Spleen (tissue), 13 donors: ENCODE measurements at regions of chr1 and their contacts with region 1.

Region 1: GRCh38 chr1:204503122-204503912 is 8.7 kb upstream of the PIK3C2B start:
- DNase-seq: no peak
- H3K4me3 ChIP-seq: no peak overlapping the region
- H3K27ac ChIP-seq: peak overlapping the region in 1 of 8 donors; percentile 11
- H3K4me1 ChIP-seq: peaks cover 10 to 70% (median 33%) of the 10 kb centered on the region in 6 donors
- H3K27me3 ChIP-seq: no peaks in the 10 kb centered on the region
- CTCF ChIP-seq: peak; percentile 77 to 90 (median 84)
- POLR2A ChIP-seq: no peak

Region 2: DNA sequence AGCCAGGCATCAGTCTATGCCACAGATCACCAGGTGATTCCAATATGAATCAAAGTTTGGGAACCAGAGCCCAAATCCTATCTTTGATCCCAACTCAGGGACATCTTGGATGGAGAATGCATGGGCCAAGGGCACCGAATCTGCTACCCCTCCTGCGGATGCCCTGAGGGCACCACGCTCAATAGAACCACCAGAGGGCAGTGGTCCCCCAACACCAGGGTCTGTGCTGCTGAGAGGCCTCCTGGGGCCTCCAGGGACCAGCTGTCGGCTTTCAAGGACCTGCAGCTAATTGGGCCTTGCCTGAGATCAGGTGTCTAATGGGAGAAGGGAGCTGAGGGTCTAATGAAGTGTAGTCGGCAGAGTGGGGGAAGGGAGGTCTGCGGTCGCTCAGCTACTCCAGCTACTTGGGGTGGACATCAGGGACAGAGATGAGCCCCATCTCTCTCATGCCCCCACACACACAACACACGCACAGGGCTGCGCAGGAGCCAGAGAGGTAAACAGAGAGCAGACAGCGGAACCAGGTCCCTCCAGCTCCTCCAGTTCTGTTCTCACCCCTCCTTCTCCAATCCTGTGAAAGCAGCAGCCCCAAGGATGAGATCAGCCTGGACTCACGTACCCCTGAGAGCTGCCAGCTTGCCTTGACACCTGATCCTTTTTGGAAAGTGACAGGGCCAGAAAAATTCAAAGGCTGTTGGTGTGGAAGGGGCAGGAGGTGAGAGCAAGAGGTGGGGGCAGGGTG is 56.8 kb before region 1 on chr1:
- intact Hi-C with region 1: loop called (anchors 2 kb)
- DNase-seq: peak; percentile 92
- H3K4me3 ChIP-seq: no peak overlapping the region
- H3K27ac ChIP-seq: peak overlapping the region in 3 of 8 donors; percentile 22 to 55 (median 30)
- H3K4me1 ChIP-seq: peaks cover 13 to 74% (median 56%) of the 10 kb centered on the region in 6 donors
- H3K27me3 ChIP-seq: no peaks in the 10 kb centered on the region
- CTCF ChIP-seq: peak; percentile 83 to 93 (median 89)
- POLR2A ChIP-seq: no peak